Naive thymus-derived CD4-positive, alpha-beta T cell (primary cell): ENCODE measurements at regions of chr21 and their contacts with region 1.

Region 1: DNA sequence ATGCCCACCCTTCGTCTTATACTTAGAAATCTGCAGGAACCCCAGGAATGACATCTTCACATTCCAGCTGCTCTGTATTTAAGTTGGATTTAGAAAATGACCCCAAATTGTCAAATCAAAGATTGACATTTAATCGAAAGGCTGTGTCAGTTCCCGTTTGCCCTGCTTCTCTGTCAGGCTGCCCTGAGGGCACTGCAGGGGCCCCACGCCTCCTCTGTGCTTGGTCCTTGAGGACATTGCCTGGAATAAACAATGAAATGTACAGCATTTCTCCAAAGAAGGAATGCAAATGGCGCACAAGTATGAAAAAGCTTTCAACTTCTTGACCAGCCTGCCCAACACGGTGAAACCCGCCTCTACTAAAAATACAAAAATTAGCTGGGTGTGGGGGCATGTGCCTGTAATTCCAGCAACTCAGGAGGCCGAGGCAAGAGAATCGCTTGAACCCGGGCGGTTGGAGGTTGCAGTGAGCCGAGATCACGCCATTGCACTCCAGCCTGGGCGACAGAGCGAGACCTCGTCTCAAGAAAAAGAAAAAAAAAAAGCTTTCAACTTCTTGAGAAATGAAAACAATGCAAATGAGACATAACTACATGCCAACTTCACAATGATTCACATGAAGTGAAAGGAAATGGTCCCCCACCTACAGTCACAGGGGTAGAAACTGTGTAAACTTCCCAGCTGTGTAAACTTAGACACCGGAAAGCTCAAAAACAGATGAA is 3.0 kb downstream of the TMPRSS3 start:
- DNase-seq: peak in 7 of 9 donors; percentile 29 to 64 (median 54)
- ATAC-seq: peak; percentile 82
- H3K4me3 ChIP-seq: peak overlapping the region; percentile 5
- H3K4me3 Mint-ChIP-seq: peak overlapping the region; percentile 22 to 75 (median 64)
- H3K27ac ChIP-seq: peak overlapping the region; percentile 46
- H3K27ac Mint-ChIP-seq: peak overlapping the region; percentile 5 to 91 (median 83)
- H3K4me1 ChIP-seq: peaks cover 13 to 34% of the 10 kb centered on the region in 2 donors
- H3K4me1 Mint-ChIP-seq: peaks cover 23 to 84% (median 63%) of the 10 kb centered on the region in 7 donors
- H3K27me3 ChIP-seq: no peaks in the 10 kb centered on the region
- H3K27me3 Mint-ChIP-seq: peaks cover 0 to 4% (median 0%) of the 10 kb centered on the region in 5 donors

Region 2: DNA sequence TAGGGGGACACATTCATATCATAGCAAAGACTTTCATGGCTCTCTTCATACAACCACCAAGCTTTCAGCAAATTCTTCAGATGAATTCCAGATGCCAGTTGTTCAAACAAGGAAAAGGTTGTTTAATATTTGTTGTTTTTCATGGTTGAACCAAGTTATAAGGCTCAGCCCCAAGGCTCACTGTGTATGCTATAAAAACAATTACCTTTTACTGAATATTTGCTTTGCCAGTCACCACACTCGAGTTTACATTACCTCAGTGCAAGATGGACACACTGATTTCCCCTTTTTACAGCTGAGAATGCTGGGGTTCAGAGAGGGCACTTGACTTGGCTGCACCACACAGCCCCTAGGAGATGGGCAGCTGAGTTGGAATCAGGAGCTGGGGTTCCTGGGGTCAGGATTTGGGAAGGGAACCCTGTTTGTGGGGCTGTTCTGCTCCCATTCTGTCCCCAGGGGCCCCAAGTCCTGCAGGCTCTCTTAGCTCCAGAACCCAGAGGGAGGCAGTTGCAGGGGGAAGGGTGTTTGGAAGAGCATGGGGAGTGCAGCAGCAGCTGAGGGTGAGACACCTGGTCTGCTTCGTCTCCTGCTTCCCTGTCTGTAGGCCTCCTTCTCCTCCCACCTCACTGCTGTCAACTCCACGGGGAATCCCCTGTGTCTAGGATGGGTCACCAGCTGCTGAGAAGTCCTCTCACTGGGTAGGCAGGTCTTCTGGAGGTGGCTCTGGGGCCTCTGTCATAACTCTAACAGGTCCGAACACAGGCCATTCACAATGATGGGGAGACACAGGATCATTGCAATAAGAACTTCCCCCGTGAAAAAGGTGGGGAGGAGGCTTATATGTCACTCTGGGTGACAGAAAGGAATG is 872.1 kb before region 1 on chr21:
- CTCF ChIA-PET with region 1: no interaction called
- POLR2A ChIA-PET with region 1: no interaction called
- intact Hi-C with region 1: no loop called
- DNase-seq: no peak
- ATAC-seq: no peak
- H3K4me3 ChIP-seq: no peak overlapping the region
- H3K4me3 Mint-ChIP-seq: no peak overlapping the region
- H3K27ac ChIP-seq: no peak overlapping the region
- H3K27ac Mint-ChIP-seq: no peak overlapping the region
- H3K4me1 ChIP-seq: no peaks in the 10 kb centered on the region
- H3K4me1 Mint-ChIP-seq: peaks cover 0 to 7% (median 0%) of the 10 kb centered on the region in 7 donors
- H3K27me3 ChIP-seq: no peaks in the 10 kb centered on the region
- H3K27me3 Mint-ChIP-seq: peaks cover 0 to 17% (median 7%) of the 10 kb centered on the region in 5 donors

Region 3: DNA sequence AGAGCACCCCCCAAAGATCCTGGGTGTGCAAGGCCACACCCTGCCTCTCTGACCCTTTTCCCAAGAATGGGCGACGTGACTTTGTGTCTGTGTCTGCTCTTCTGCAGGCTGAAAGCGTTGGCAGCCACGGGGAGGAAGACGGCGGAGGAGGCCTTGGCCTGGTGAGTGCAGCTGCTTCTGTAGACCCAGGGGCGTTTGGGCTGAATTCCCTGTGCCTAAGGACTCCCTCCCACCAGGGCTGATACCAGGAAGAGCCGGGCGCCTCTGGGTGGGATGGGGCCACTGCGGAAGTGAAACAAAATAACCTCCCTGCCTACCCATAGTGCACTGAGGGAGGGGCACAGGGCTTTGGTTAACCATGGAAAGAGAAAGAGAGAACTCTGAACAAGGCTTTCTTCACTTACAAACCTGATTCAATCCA is 13.3 kb after region 1 on chr21:
- CTCF ChIA-PET with region 1: interaction called, 14 read pairs
- POLR2A ChIA-PET with region 1: interaction called, 81 read pairs
- intact Hi-C with region 1: loop called (anchors 1 kb)
- DNase-seq: peak in 8 of 9 donors; percentile 42 to 71 (median 58)
- ATAC-seq: peak; percentile 67
- H3K4me3 ChIP-seq: peak overlapping the region; percentile 66
- H3K4me3 Mint-ChIP-seq: peak overlapping the region; percentile 82 to 99 (median 94)
- H3K27ac ChIP-seq: peak overlapping the region; percentile 89
- H3K27ac Mint-ChIP-seq: peak overlapping the region in 8 of 9 donors; percentile 88 to 99 (median 90)
- H3K4me1 ChIP-seq: peaks cover 56 to 62% of the 10 kb centered on the region in 2 donors
- H3K4me1 Mint-ChIP-seq: peaks cover 42 to 64% (median 60%) of the 10 kb centered on the region in 7 donors
- H3K27me3 ChIP-seq: no peaks in the 10 kb centered on the region
- H3K27me3 Mint-ChIP-seq: no peaks in the 10 kb centered on the region